IMR-90 (cell line): ENCODE measurements at regions of chr22 and their contacts with region 1.

Region 1: DNA sequence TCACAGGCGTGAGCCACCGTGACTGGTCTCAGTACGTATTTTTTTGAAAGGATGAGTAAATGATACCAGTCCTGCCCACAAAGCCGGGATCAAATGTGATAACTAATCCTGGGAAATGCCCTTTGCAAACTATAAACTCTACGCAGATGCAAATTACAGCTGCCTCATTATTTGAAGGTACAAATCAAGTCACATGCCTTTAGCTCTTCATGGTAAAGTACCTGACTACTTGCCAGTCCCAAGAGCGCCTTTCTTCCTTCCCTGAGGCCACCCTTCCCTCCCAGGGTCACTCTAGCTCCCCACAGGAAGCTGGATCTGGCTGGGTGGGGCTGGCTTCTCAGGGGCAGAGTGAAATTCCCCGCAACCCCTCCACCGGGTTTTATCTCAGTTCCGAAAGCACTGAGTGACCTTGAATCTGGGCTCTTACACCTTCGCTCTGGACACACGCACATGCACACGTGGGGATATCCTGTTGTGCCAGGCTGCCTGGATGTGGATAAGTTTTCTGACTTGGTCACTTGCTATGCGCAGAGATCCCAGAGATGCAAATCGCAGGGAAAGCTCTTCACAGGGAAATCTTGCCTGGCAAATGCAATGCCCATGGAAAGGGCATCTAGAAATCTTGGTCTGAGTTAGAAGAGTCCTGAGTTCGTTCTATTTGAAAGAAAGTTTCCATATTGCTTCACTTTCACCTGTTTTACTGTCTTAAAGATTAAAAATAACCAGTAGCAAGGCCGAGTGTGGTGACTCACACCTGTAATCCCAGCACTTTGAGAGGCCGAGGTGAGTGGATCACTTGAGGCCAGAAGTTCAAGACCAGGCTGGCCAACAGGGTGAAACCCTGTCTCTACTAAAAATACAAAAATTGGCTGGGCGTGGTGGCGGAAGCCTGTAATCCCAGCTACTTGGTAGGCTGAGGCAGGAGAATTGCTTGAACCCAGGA is 8.5 kb downstream of the A4GALT start:
- DNase-seq: no peak
- ATAC-seq: no peak
- H3K4me3 ChIP-seq: no peak overlapping the region
- H3K27ac ChIP-seq: no peak overlapping the region
- H3K4me1 ChIP-seq: peaks cover 6% of the 10 kb centered on the region
- H3K27me3 ChIP-seq: no peaks in the 10 kb centered on the region
- CTCF ChIP-seq: no peak
- POLR2A ChIP-seq: no peak
- RAD21 ChIP-seq: no peak

Region 2: GRCh38 chr22:42608823-42609361 is 103.3 kb before region 1 on chr22:
- CTCF ChIA-PET with region 1: no interaction called
- POLR2A ChIA-PET with region 1: interaction called, 10 read pairs
- dilution Hi-C with region 1: no loop called
- in situ Hi-C with region 1: no loop called
- intact Hi-C with region 1: no loop called
- DNase-seq: peak; percentile 76
- ATAC-seq: peak; percentile 69
- H3K4me3 ChIP-seq: no peak overlapping the region
- H3K27ac ChIP-seq: peak overlapping the region; percentile 72
- H3K4me1 ChIP-seq: peaks cover 35% of the 10 kb centered on the region
- H3K27me3 ChIP-seq: no peaks in the 10 kb centered on the region
- CTCF ChIP-seq: no peak
- POLR2A ChIP-seq: no peak
- RAD21 ChIP-seq: no peak